Activated CD8-positive, alpha-beta T cell treated with anti-CD3 and anti-CD28 coated beads, Interleukin-2, amount 10 ng/mL, durations not matched to agents 7 days and 5 days (primary cell): ENCODE measurements at regions of chr15 and their contacts with region 1.

Region 1: GRCh38 chr15:80776420-80777045 is 2.6 kb upstream of the CEMIP start:
- DNase-seq: peak; percentile 71
- ATAC-seq: peak; percentile 45
- H3K4me3 Mint-ChIP-seq: no peak overlapping the region
- H3K27ac Mint-ChIP-seq: no peak overlapping the region
- H3K4me1 Mint-ChIP-seq: peaks cover 8% of the 10 kb centered on the region
- H3K27me3 Mint-ChIP-seq: peaks cover 39% of the 10 kb centered on the region

Region 2: DNA sequence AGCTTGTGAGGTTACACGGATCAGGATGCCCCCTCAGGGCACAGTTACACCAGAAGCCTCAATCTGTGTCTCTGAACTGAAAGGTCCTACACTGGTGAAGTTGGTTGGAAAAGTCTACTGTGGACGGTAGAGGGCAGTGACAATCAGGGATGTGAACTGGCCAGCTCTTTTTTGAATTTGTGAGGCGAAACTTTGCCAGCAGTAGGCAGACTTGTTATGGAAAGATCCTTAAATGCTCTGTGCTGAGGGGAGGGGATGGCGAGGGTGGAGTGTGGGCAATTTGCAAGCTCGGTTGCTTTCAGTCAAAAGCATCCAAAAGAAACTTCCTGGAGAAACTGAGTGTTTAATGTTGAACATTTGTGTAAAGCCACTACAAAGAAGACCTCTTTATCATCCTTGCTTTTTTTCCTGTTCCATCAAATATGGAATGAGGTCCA is 208.8 kb before region 1 on chr15:
- CTCF ChIA-PET with region 1: interaction called, 31 read pairs
- POLR2A ChIA-PET with region 1: no interaction called
- DNase-seq: peak; percentile 33
- ATAC-seq: no peak
- H3K4me3 Mint-ChIP-seq: no peak overlapping the region
- H3K27ac Mint-ChIP-seq: no peak overlapping the region
- H3K4me1 Mint-ChIP-seq: no peaks in the 10 kb centered on the region
- H3K27me3 Mint-ChIP-seq: peaks cover 8% of the 10 kb centered on the region

Region 3: GRCh38 chr15:80674245-80674614 is 102.3 kb before region 1 on chr15:
- CTCF ChIA-PET with region 1: interaction called, 11 read pairs
- POLR2A ChIA-PET with region 1: no interaction called
- DNase-seq: no peak
- ATAC-seq: no peak
- H3K4me3 Mint-ChIP-seq: no peak overlapping the region
- H3K27ac Mint-ChIP-seq: no peak overlapping the region
- H3K4me1 Mint-ChIP-seq: no peaks in the 10 kb centered on the region
- H3K27me3 Mint-ChIP-seq: peaks cover 3% of the 10 kb centered on the region

Region 4: GRCh38 chr15:80749541-80749968 is 27.0 kb before region 1 on chr15:
- CTCF ChIA-PET with region 1: interaction called, 10 read pairs
- POLR2A ChIA-PET with region 1: no interaction called
- DNase-seq: no peak
- ATAC-seq: no peak
- H3K4me3 Mint-ChIP-seq: no peak overlapping the region
- H3K27ac Mint-ChIP-seq: no peak overlapping the region
- H3K4me1 Mint-ChIP-seq: no peaks in the 10 kb centered on the region
- H3K27me3 Mint-ChIP-seq: peaks cover 2% of the 10 kb centered on the region

Region 5: GRCh38 chr15:80788536-80788935 is 12.0 kb after region 1 on chr15:
- CTCF ChIA-PET with region 1: interaction called, 30 read pairs
- POLR2A ChIA-PET with region 1: no interaction called
- DNase-seq: no peak
- ATAC-seq: no peak
- H3K4me3 Mint-ChIP-seq: no peak overlapping the region
- H3K27ac Mint-ChIP-seq: no peak overlapping the region
- H3K4me1 Mint-ChIP-seq: peaks cover 2% of the 10 kb centered on the region
- H3K27me3 Mint-ChIP-seq: peaks cover 17% of the 10 kb centered on the region